ENCODE measurements at regions of chr17 and their contacts with region 1.

Region 1: DNA sequence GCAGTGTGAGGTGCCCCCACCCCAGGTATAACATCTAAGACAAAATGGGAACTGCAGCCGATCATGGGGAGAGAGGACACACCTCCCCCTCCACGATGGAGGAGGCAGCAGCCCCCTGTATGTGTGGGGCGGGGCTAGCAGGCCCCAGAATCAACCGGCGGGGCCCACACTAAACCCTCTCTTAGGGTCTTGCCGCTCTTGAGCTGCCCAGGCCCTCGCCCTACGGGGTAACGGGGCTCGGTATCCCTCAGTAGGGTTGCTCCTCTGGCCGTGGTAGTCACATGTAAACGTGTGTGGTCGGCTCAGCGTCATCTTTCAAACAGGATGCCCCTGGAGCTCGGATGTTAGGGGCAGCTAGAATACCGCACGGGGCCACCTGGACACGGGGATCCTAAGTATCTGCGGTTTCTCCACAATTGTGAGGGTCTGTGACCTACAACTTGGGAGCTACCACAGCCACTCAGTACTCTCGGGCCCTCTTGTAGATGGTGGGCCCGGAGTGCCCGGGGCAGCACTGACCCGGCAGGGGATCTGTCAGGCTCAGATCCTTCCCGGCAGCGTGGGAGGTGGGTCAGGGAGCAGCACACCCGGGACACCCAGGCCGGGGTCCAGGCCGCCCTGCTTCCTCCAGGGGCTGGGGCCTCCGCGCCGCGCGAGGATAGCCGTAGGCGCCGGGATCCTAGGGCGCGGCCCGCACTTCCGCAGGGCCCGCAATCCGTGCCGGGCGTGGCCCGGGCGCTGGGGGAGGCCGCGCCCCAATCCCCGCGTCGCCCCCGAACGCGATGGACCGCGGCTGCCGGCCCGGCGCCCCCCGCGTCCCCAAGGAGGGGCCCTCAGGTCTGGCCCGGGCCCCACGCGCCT is 790 bp downstream of the ARHGDIA start:
- DNase-seq: peak; percentile 34
- ATAC-seq: peak; percentile 4
- H3K4me3 Mint-ChIP-seq: peak overlapping the region; percentile 76
- H3K27ac Mint-ChIP-seq: peak overlapping the region; percentile 88
- H3K4me1 Mint-ChIP-seq: peaks cover 16% of the 10 kb centered on the region
- H3K27me3 Mint-ChIP-seq: no peaks in the 10 kb centered on the region; the same call in 1 of the 2 replicates
- CTCF ChIP-seq: no peak

Region 2: DNA sequence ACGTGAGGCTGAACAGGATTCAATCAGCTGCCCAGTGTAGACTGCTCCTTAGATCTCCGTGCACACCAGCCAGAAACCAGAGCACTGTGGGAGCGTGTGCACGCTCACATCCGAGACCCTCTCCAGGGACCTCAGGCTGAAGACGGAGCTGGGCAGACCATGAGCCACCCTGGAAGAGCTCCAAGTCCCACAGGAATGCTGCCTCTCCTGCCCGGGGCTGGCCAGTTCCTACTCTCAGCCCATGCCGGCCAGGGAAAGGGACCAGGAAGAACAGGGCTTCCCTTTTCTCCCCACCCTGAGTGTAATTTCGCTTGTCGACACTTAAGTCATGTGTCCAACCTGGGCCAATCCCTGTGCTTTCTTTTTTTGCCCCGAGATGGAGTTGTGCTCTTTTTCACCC is 14.2 kb after region 1 on chr17:
- CTCF ChIA-PET with region 1: interaction called, 10 read pairs
- POLR2A ChIA-PET with region 1: interaction called, 4 read pairs
- DNase-seq: no peak
- ATAC-seq: peak; percentile 21; the same call in 1 of the 2 replicates
- H3K4me3 Mint-ChIP-seq: no peak overlapping the region
- H3K27ac Mint-ChIP-seq: no peak overlapping the region; the same call in 1 of the 2 replicates
- H3K4me1 Mint-ChIP-seq: 0 out of 2 replicates have a peak, but pooled peaks cover 4% of the 10 kb centered on the region
- H3K27me3 Mint-ChIP-seq: no peaks in the 10 kb centered on the region
- CTCF ChIP-seq: no peak

Region 3: GRCh38 chr17:81890447-81891299 is 20.3 kb after region 1 on chr17:
- CTCF ChIA-PET with region 1: interaction called, 16 read pairs
- POLR2A ChIA-PET with region 1: interaction called, 6 read pairs
- DNase-seq: no peak
- ATAC-seq: no peak
- H3K4me3 Mint-ChIP-seq: peak overlapping the region; percentile 88
- H3K27ac Mint-ChIP-seq: peak overlapping the region; percentile 82
- H3K4me1 Mint-ChIP-seq: peaks cover 11% of the 10 kb centered on the region
- H3K27me3 Mint-ChIP-seq: no peaks in the 10 kb centered on the region
- CTCF ChIP-seq: no peak

Region 4: GRCh38 chr17:81911277-81911961 is 41.1 kb after region 1 on chr17 and contains the start of gene PCYT2:
- CTCF ChIA-PET with region 1: interaction called, 12 read pairs
- POLR2A ChIA-PET with region 1: interaction called, 3 read pairs
- DNase-seq: peak; percentile 96
- ATAC-seq: peak; percentile 95
- H3K4me3 Mint-ChIP-seq: peak within 1 kb of the TSS; percentile 80
- H3K27ac Mint-ChIP-seq: no peak within 1 kb of the TSS; the same call in 1 of the 2 replicates
- H3K4me1 Mint-ChIP-seq: peaks cover 3% of the 10 kb centered on the region; the same call in 1 of the 2 replicates
- H3K27me3 Mint-ChIP-seq: no peaks in the 10 kb centered on the region
- CTCF ChIP-seq: no peak
- total RNA-seq, gene PCYT2: 24.7 to 31.4 TPM (median 26.3 TPM) in 3 replicates

Region 5: GRCh38 chr17:81927653-81928543 is 57.6 kb after region 1 on chr17 and contains the start of gene MAFG:
- CTCF ChIA-PET with region 1: interaction called, 13 read pairs
- POLR2A ChIA-PET with region 1: interaction called, 7 read pairs
- DNase-seq: peak; percentile 90
- ATAC-seq: peak; percentile 43
- H3K4me3 Mint-ChIP-seq: peak within 1 kb of the TSS; percentile 75
- H3K27ac Mint-ChIP-seq: no peak within 1 kb of the TSS
- H3K4me1 Mint-ChIP-seq: peaks cover 27% of the 10 kb centered on the region
- H3K27me3 Mint-ChIP-seq: peaks cover 3% of the 10 kb centered on the region; the same call in 1 of the 2 replicates
- CTCF ChIP-seq: no peak
- total RNA-seq, gene MAFG: 24.2 to 29.8 TPM (median 24.3 TPM) in 3 replicates

Region 6: DNA sequence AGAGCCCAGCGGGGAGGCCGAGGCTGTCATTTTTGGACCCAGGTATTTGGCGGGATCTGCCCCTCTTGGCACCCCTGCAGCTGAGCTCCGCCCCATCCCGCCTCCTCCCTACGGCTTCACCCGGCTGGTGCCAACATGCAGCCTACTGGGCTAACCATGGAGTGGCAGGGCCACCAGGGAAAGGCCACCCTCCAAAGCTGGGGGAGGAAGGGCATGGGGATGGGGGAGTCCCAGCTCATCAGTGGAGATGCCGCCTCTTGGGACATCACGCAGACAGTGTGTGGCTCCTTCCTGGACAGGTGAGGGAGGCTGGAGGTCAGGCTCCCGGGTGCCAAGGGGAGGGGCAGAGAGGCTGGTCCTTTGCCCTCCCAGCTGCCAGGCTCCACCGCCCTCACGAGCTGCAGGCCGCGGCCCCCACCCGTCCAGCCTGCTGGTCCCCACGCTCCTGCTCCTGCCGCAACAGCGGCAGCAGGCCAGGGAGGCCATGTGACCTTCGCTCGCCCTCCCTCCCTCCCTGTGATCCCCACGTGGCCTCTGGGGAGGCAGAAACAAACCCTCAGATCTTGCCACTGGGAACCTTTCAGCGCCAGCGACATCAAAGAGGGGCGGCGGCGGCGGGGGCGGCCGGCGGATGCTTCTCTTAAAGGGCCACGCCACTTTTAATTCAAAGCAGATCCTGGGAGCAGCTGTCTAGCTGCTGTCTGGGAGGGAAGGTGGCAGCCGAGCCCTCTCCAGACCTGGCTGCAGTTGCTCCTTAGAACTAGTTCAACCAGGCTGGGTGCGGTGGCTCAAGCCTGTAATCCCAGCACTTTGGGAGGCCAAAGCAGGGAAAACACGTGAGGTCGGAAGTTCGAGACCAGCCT is 97.4 kb after region 1 on chr17:
- CTCF ChIA-PET with region 1: interaction called, 10 read pairs
- POLR2A ChIA-PET with region 1: no interaction called
- DNase-seq: peak; percentile 78
- ATAC-seq: peak; percentile 57
- H3K4me3 Mint-ChIP-seq: peak overlapping the region; percentile 42
- H3K27ac Mint-ChIP-seq: no peak overlapping the region
- H3K4me1 Mint-ChIP-seq: peaks cover 11% of the 10 kb centered on the region
- H3K27me3 Mint-ChIP-seq: peaks cover 68% of the 10 kb centered on the region
- CTCF ChIP-seq: no peak

Region 7: DNA sequence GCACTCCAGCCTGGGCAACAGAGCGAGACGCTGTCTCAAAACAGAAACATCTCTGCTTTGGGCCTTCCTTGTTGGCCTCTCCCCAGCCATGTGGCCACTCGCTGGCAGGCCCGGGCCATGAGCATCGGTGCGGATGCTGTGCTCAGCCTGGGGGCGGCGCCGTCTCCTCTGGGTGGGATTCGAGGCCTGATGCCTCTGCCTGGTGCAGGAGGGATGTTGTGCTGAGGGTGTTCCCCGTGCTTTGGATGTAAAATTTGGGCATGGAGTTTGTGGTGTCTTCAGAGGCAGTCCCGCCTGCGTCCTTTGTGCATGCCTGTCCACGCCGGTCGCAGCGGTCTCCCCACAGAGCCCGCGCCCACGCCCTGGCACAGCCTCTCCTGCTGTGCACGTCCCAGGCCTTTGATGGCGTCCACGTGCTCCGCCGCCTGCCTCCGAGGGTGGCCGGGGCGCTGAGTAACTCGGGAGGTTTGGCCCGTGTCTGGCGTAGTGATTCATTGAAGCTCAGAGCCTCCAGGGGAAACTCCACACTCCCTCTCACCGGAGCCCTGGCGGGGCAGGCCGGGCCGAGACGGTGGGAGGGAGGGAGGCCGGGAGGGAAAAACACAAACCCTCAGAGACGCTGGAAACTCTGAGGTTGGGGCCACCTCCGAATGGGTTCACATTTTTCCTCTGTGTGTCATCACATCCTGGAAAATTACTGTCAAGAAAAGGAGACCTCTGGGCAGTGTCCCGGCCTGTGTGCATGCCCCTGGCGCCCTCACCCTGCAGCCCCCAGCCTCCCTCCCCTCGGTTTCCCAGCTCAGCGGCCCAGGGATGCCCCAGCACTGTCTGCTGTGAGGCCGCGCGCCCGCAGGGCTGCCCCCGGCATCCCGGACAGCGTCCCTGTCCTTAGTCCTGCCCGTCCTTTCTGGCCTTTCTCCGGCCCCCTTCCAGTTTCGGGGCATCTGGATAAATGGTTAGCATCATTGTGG is 133.3 kb after region 1 on chr17:
- CTCF ChIA-PET with region 1: no interaction called
- POLR2A ChIA-PET with region 1: no interaction called
- DNase-seq: no peak
- ATAC-seq: peak; percentile 21; the same call in 1 of the 2 replicates
- H3K4me3 Mint-ChIP-seq: no peak overlapping the region
- H3K27ac Mint-ChIP-seq: no peak overlapping the region
- H3K4me1 Mint-ChIP-seq: no peaks in the 10 kb centered on the region
- H3K27me3 Mint-ChIP-seq: no peaks in the 10 kb centered on the region
- CTCF ChIP-seq: no peak